Activated CD4-positive, alpha-beta memory T cell treated with anti-CD3 and anti-CD28 coated beads for 36 hours (primary cell): ENCODE measurements at regions of chr13 and their contacts with region 1.

Region 1: GRCh38 chr13:52011632-52012511 is at the start of gene ALG11:
- DNase-seq: peak; percentile 100
- H3K4me3 Mint-ChIP-seq: peak within 1 kb of the TSS; percentile 99
- H3K27ac Mint-ChIP-seq: peak within 1 kb of the TSS; percentile 83
- H3K4me1 Mint-ChIP-seq: peaks cover 9% of the 10 kb centered on the region
- H3K27me3 Mint-ChIP-seq: peaks cover 18% of the 10 kb centered on the region
- total RNA-seq, gene ALG11: 19.0 to 19.5 TPM

Region 2: DNA sequence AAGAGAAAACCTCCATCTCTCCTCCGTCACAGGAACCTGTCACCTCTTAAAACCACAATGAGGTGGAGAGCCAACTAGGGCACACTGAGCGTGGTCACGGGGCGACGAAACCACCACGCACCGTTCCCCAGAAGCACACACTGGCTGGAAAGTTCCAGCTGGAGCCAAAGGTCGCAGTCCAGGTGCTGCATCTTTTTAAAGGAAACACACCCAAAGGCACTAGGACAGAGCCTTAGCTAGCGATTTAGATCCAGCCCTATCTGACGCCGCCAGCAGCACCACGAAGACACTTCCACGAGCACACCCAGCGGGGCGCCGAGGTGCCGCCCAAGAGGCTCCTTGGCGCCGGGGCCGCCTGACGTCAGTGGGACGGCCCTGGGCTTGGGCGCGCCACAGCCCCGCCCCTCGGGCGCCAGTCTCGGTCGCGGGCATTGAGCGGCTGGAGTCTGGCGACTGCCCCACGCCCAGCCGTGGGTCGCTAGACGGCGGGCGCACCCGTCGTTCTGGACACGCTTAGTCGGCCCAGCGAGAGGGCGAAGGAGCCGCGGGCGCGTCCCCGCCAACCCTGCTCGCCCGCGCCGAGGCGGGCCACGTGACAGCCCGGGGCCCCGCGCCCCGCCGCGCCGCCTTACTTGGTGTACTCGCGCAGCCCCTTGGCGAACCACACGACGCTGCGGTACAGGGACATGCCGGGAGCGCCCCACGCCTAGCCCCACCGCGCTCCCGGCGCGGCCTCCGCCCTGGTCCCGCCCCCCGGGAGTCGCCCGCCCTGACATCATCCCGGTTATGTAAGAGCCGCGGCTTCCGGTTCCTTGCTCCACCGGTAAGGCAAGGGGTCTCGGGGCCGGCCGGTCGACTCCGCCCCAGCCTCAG is 208.2 kb before region 1 on chr13 and contains the start of gene DHRS12:
- CTCF ChIA-PET with region 1: no interaction called
- POLR2A ChIA-PET with region 1: no interaction called
- intact Hi-C with region 1: loop called (anchors 1 kb)
- DNase-seq: peak; percentile 89
- H3K4me3 Mint-ChIP-seq: peak within 1 kb of the TSS; percentile 94
- H3K27ac Mint-ChIP-seq: peak within 1 kb of the TSS; percentile 100
- H3K4me1 Mint-ChIP-seq: peaks cover 58% of the 10 kb centered on the region
- H3K27me3 Mint-ChIP-seq: peaks cover 2% of the 10 kb centered on the region
- total RNA-seq, gene DHRS12: 6.7 to 7.0 TPM

Region 3: GRCh38 chr13:51844862-51845573 is 166.9 kb before region 1 on chr13 and contains the start of gene TMEM272:
- CTCF ChIA-PET with region 1: interaction called, 4 read pairs
- POLR2A ChIA-PET with region 1: no interaction called
- intact Hi-C with region 1: loop called (anchors 5 kb)
- DNase-seq: peak; percentile 74
- H3K4me3 Mint-ChIP-seq: peak within 1 kb of the TSS; percentile 27
- H3K27ac Mint-ChIP-seq: no peak within 1 kb of the TSS
- H3K4me1 Mint-ChIP-seq: peaks cover 16% of the 10 kb centered on the region
- H3K27me3 Mint-ChIP-seq: peaks cover 4% of the 10 kb centered on the region
- total RNA-seq, gene TMEM272: 0.10 to 0.31 TPM

Region 4: DNA sequence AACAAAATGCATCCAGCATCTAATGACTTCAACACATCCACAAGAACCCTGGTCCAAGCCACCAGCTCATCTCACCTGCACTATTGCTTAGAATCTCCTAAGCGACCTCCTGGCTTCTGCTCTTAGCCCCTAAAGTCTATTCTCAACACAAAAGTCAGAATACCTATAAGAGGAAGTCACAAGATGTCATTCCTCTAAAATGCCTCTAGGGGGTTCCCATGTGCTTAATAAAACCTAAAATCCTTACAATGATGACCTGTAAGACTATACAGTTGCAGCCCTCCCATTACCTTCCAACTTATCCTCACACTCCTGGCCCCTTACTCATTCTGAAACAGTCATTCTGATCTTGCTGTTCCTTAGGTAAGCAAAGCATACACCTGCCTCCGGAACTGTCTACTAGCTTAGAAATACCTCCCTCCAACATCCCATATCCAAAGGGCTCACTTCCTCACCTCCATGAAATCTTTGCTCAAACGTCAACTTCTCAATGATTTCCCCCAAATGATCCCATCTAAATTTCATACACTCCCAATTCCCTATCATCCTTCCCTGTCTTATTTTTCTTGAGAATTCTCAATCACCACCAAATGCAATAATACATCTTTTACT is 10.6 kb before region 1 on chr13:
- CTCF ChIA-PET with region 1: interaction called, 18 read pairs
- POLR2A ChIA-PET with region 1: no interaction called
- intact Hi-C with region 1: no loop called
- DNase-seq: no peak
- H3K4me3 Mint-ChIP-seq: no peak overlapping the region
- H3K27ac Mint-ChIP-seq: no peak overlapping the region
- H3K4me1 Mint-ChIP-seq: no peaks in the 10 kb centered on the region
- H3K27me3 Mint-ChIP-seq: peaks cover 9% of the 10 kb centered on the region

Region 5: DNA sequence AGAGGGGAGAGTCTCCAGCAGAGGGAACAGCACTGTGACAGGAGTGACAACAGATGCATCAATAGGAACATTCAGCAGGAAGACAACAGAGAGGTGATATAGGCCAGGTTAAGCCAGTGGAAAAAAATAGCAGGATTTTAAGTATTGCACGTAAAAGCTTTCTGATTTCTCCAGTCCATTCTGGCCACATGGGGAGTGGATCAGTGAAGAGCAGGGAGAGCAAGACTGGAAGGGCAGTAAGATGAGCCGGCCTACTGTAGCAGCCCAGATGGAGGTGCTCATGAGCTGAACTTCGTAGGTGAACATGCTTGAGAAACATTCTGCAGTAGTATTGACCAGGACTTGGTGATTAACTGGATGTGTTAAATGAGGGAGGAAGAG is 14.4 kb after region 1 on chr13:
- CTCF ChIA-PET with region 1: no interaction called
- POLR2A ChIA-PET with region 1: no interaction called
- intact Hi-C with region 1: no loop called
- DNase-seq: no peak
- H3K4me3 Mint-ChIP-seq: no peak overlapping the region
- H3K27ac Mint-ChIP-seq: no peak overlapping the region
- H3K4me1 Mint-ChIP-seq: peaks cover 17% of the 10 kb centered on the region
- H3K27me3 Mint-ChIP-seq: no peaks in the 10 kb centered on the region

Region 6: GRCh38 chr13:52399708-52400107 is 387.8 kb after region 1 on chr13:
- CTCF ChIA-PET with region 1: no interaction called
- POLR2A ChIA-PET with region 1: no interaction called
- intact Hi-C with region 1: no loop called
- DNase-seq: no peak
- H3K4me3 Mint-ChIP-seq: no peak overlapping the region
- H3K27ac Mint-ChIP-seq: no peak overlapping the region
- H3K4me1 Mint-ChIP-seq: peaks cover 6% of the 10 kb centered on the region
- H3K27me3 Mint-ChIP-seq: peaks cover 22% of the 10 kb centered on the region

Region 7: GRCh38 chr13:52652196-52652979 is 640.5 kb after region 1 on chr13 and contains the start of gene SUGT1:
- CTCF ChIA-PET with region 1: no interaction called
- POLR2A ChIA-PET with region 1: no interaction called
- intact Hi-C with region 1: loop called (anchors 5 kb)
- DNase-seq: peak; percentile 96
- H3K4me3 Mint-ChIP-seq: no peak within 1 kb of the TSS
- H3K27ac Mint-ChIP-seq: no peak within 1 kb of the TSS
- H3K4me1 Mint-ChIP-seq: peaks cover 16% of the 10 kb centered on the region
- H3K27me3 Mint-ChIP-seq: no peaks in the 10 kb centered on the region
- total RNA-seq, gene SUGT1: 63.1 to 64.0 TPM